Heart right ventricle (tissue), 16 donors: ENCODE measurements at regions of chr22 and their contacts with region 1.

Region 1: DNA sequence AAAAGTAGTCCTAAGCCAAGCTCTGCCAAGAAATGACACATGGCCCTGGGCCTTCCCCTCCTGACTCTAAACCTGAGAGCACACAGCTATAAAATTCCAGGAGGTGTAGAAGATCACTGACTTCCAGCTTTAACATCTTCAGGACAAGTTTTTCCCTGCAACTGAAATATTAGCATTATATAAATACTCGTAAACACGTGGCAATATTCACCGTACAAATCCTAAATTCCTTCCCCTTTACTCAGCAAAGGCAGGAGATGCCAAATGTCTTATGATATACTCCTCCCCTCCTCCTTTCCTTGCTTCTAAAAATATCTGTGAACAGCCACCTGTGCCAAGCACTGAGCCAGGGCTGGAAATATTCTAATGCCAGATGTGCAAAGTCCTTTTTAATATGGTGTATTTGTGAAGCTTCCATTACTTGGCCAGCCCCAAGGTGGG is 194.0 kb downstream of the LARGE1 start:
- DNase-seq: peak in 1 of 2 donors; percentile 36
- ATAC-seq: peak; percentile 39 to 90 (median 82)
- H3K4me3 ChIP-seq: no peak overlapping the region
- H3K27ac ChIP-seq: peak overlapping the region in 7 of 10 donors; percentile 40 to 62 (median 54)
- H3K4me1 ChIP-seq: peaks cover 0 to 59% (median 28%) of the 10 kb centered on the region in 9 donors
- H3K27me3 ChIP-seq: no peaks in the 10 kb centered on the region
- CTCF ChIP-seq: no peak

Region 2: GRCh38 chr22:33658775-33659174 is 67.5 kb before region 1 on chr22:
- intact Hi-C with region 1: loop called in 1 of 10 experiments (anchors 10 kb)
- DNase-seq: peak; percentile 29 to 74
- ATAC-seq: peak; percentile 80 to 93 (median 89)
- H3K4me3 ChIP-seq: no peak overlapping the region
- H3K27ac ChIP-seq: peak overlapping the region in 9 of 10 donors; percentile 36 to 86 (median 65)
- H3K4me1 ChIP-seq: peaks cover 0 to 52% (median 29%) of the 10 kb centered on the region in 9 donors
- H3K27me3 ChIP-seq: no peaks in the 10 kb centered on the region
- CTCF ChIP-seq: no peak

Region 3: GRCh38 chr22:33756508-33756949 is 30.2 kb after region 1 on chr22:
- intact Hi-C with region 1: no loop called
- DNase-seq: peak in 1 of 2 donors; percentile 18
- ATAC-seq: peak in 7 of 8 donors; percentile 38 to 88 (median 76)
- H3K4me3 ChIP-seq: no peak overlapping the region
- H3K27ac ChIP-seq: peak overlapping the region in 6 of 10 donors; percentile 26 to 61 (median 51)
- H3K4me1 ChIP-seq: peaks cover 4 to 28% (median 17%) of the 10 kb centered on the region in 9 donors
- H3K27me3 ChIP-seq: no peaks in the 10 kb centered on the region
- CTCF ChIP-seq: peak in 3 of 9 donors; percentile 8 to 36 (median 10)

Region 4: DNA sequence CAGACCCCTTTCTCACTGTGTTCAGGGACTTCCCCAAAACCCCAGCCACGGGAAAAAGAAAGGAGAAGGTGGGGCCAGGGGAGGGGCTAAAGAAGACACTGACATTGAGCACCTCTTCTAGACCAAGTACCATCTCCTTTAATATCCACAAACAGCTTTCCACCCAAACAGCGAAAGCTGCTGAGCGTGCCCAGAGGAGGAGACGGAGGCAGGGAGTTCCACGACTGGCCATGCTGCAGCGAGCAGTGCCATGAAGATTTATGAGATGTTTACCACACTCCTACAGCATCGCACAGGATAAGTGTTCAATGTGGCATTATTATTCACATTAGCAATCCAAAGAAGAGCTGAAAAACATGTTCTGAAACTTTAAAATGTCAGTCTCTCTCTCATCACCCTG is 66.5 kb after region 1 on chr22:
- intact Hi-C with region 1: no loop called
- DNase-seq: no peak
- ATAC-seq: peak in 5 of 8 donors; percentile 17 to 61 (median 51)
- H3K4me3 ChIP-seq: peak overlapping the region in 1 of 10 donors; percentile 12
- H3K27ac ChIP-seq: peak overlapping the region in 6 of 10 donors; percentile 8 to 69 (median 52)
- H3K4me1 ChIP-seq: peaks cover 0 to 39% (median 14%) of the 10 kb centered on the region in 9 donors
- H3K27me3 ChIP-seq: no peaks in the 10 kb centered on the region
- CTCF ChIP-seq: no peak